Tibial artery (tissue), 4 donors: ENCODE measurements at regions of chr13 and their contacts with region 1.

Region 1: GRCh38 chr13:111066544-111066943 is 48.6 kb upstream of the ARHGEF7 start:
- DNase-seq: no peak
- H3K4me3 ChIP-seq: peak overlapping the region; percentile 54 to 69
- H3K27ac ChIP-seq: no peak overlapping the region
- H3K4me1 ChIP-seq: peaks cover 0 to 7% (median 1%) of the 10 kb centered on the region in 4 donors
- H3K27me3 ChIP-seq: no peaks in the 10 kb centered on the region
- CTCF ChIP-seq: no peak

Region 2: DNA sequence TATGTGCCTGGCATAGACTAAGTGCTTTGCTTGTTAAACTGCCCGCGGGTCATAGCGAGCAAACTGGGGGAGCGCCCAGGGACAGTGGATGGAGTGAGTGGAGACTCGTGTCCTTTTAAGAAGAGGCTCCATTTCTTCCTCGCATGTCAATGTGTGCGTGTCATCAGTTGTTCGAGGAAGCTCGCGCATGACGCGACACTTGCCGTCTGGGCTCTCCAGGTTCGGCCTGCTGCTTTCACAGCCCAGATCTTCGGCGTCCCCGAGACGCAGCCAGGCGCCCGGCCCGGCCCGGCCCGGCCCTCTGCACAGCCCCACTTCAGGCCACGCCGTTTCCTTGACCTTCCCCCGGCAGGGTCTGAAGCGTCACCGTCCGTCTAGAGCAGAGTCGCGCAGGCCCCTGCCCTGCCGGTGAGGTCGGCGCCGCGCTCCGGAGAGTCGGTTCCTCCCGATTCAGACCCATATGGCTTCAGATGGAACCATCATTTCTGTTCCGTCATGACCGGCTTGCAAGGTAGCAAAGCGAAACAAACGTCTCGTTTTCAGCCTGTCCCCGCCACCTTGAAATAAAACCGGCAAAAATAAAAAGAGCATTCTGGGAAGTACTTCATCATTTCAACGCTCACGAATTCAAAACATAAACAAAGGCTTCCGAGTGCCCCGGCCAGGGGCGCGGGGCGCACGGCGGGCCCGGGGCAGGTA is 48.0 kb after region 1 on chr13:
- intact Hi-C with region 1: loop called (anchors 5 kb)
- DNase-seq: peak; percentile 61 to 81
- H3K4me3 ChIP-seq: peak overlapping the region; percentile 76 to 78
- H3K27ac ChIP-seq: peak overlapping the region; percentile 90
- H3K4me1 ChIP-seq: peaks cover 0 to 42% (median 19%) of the 10 kb centered on the region in 4 donors
- H3K27me3 ChIP-seq: no peaks in the 10 kb centered on the region
- CTCF ChIP-seq: no peak

Region 3: DNA sequence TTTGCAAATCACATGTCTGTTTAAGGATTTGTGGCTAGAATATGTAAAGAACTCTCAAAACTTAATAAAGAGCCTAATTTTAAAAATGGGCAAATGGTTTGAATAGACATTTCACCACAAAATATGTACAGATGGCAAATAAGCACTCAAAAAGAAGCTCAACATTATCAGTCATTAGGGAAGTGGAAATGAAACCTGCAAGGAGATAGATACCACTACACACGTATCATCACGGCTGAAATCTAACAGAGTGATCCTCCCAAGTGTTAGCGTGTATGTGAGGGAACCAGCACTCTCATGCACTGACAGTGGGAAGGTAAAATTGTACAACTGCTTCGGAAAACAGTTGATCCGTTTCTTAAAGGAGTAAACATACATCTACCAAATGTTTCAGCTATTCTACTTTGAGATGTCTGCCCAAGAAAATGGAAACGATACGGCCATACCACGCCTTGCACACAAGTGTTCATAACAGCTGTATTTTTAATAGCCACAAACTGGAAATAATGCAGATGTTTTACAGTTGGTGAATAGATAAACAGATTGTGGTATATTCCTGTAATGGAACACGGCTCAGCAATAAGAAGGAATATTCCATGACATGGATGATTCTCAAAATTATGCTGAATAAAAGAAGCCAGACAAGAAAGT is 63.0 kb after region 1 on chr13:
- intact Hi-C with region 1: no loop called
- DNase-seq: no peak
- H3K4me3 ChIP-seq: no peak overlapping the region
- H3K27ac ChIP-seq: no peak overlapping the region
- H3K4me1 ChIP-seq: peaks cover 0 to 22% (median under 1%) of the 10 kb centered on the region in 4 donors
- H3K27me3 ChIP-seq: no peaks in the 10 kb centered on the region
- CTCF ChIP-seq: no peak

Region 4: GRCh38 chr13:111281751-111282311 is 215.3 kb after region 1 on chr13:
- intact Hi-C with region 1: loop called (anchors 10 kb)
- DNase-seq: no peak
- H3K4me3 ChIP-seq: no peak overlapping the region
- H3K27ac ChIP-seq: peak overlapping the region; percentile 71 to 80
- H3K4me1 ChIP-seq: peaks cover 0 to 65% (median 39%) of the 10 kb centered on the region in 4 donors
- H3K27me3 ChIP-seq: no peaks in the 10 kb centered on the region
- CTCF ChIP-seq: no peak